SK-N-SH (cell line): ENCODE measurements at regions of chr3 and their contacts with region 1.

Region 1: DNA sequence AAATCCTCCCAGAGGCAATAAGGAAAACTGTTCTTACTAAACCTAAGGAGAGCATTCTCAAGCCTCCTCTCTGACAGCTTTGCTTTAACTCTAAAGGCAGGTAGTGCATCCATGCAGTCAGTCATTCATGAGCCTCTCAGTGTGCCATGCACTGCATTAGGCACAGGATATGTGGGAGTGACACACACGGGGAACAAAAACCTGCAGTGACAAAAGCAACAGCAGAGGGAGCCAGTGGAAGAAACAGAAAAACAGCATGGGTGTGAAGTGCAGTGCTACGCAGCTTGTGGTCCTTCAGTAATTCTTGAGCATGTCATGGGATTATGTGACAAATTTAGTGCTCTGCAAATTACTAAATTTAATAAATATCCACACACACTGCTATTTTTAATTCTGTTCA is 230.7 kb downstream of the BBX start:
- DNase-seq: peak; percentile 24
- H3K4me3 ChIP-seq: no peak overlapping the region
- H3K27ac ChIP-seq: peak overlapping the region in 1 of 2 experiments; percentile 76; a peak in 2 of 4 replicates
- H3K4me1 ChIP-seq: peaks cover 0 to 26% of the 10 kb centered on the region in 2 experiments; a peak in 2 of 4 replicates
- H3K27me3 ChIP-seq: no peaks in the 10 kb centered on the region
- CTCF ChIP-seq: peak; percentile 65
- EP300 ChIP-seq: no peak
- RAD21 ChIP-seq: peak; percentile 66

Region 2: GRCh38 chr3:107690522-107691138 is 62.9 kb before region 1 on chr3:
- CTCF ChIA-PET with region 1: interaction called, 11 read pairs
- POLR2A ChIA-PET with region 1: no interaction called
- DNase-seq: peak; percentile 35
- H3K4me3 ChIP-seq: no peak overlapping the region; a peak in 1 of 4 replicates
- H3K27ac ChIP-seq: no peak overlapping the region
- H3K4me1 ChIP-seq: no peaks in the 10 kb centered on the region; a peak in 1 of 4 replicates
- H3K27me3 ChIP-seq: no peaks in the 10 kb centered on the region
- CTCF ChIP-seq: peak; percentile 77
- EP300 ChIP-seq: no peak
- RAD21 ChIP-seq: peak; percentile 61

Region 3: DNA sequence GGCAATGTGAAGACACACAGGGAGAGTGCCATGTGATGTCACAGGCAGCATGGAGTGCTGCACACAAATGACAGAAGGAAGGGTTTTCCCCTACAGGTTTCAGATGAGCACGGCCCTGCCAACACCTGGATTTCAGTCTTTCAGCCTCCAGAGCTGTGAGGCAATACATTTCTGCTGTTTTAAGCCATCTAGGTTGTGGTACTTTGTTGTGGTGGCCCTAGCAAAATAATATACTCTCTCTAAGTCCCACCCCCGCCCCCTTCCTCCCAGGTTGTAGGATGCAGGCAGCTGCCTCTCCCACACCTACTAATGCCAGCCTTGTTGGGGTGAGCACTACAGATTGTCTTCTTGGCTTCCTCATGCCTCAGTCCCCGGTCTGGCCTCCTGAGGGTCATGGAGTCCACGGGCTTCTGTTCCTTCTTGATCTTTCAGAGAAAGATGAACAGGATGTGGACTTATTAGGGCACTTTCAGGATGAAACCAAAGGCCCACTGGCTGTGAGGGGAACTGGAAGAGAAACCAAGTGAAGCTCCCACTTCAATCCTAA is 157.3 kb after region 1 on chr3:
- CTCF ChIA-PET with region 1: no interaction called
- POLR2A ChIA-PET with region 1: no interaction called
- DNase-seq: no peak
- H3K4me3 ChIP-seq: no peak overlapping the region
- H3K27ac ChIP-seq: no peak overlapping the region
- H3K4me1 ChIP-seq: no peaks in the 10 kb centered on the region; a peak in 1 of 4 replicates
- H3K27me3 ChIP-seq: no peaks in the 10 kb centered on the region
- CTCF ChIP-seq: no peak
- EP300 ChIP-seq: no peak
- RAD21 ChIP-seq: no peak